ENCODE measurements at regions of chr15 and their contacts with region 1.

Region 1: DNA sequence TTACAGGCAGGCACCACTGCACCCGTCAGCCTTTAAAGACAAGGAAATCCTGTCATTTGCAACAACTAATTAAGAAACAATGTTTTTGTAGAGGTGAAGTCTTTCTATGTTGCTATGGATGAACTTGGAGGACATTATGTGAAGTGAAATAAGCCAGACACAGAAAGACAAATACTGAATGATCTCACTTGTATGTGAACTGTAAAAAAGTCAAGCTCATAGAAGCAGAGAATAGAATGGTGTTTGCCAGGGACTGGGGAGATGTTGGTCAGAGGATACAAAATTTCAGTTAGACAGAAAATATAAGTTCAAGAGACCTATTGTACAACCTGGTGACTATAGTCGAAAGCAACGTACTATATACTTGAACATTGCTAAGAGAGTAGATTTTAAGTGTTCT is 27.2 kb upstream of the ARPIN start:
- DNase-seq: no peak
- H3K4me3 ChIP-seq: no peak overlapping the region
- H3K27ac ChIP-seq: no peak overlapping the region
- H3K27me3 ChIP-seq: no peaks in the 10 kb centered on the region
- CTCF ChIP-seq: no peak

Region 2: DNA sequence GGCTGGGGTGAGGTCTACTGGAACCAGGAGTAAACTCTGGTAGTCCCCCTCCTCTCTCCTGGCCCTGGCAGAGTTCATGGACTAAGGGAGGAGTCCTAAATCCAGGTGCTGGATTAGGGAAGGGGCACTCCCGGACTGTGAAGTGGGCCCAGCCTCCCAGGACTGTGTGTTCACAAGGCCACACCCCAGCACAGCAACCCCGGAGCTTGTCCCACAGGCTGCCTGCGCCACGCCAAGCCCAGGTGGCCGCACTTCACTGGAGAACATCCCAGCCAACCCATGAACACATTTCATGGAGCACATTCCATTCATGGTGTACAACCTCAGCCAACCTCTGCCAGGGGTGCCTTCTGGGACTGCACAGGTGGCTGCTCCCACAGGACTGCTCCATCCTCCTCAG is 35.4 kb before region 1 on chr15:
- intact Hi-C with region 1: loop called in 1 of 2 experiments (anchors 5 kb)
- DNase-seq: peak in 1 of 10 donors; percentile 23
- H3K4me3 ChIP-seq: no peak overlapping the region
- H3K27ac ChIP-seq: no peak overlapping the region
- H3K27me3 ChIP-seq: no peaks in the 10 kb centered on the region
- CTCF ChIP-seq: no peak